Activated T-helper 2 cell treated with anti-CD3 and anti-CD28 coated beads, Interferon-gamma antibody, Interleukin-2, Interleukin-4, amounts not matched to agents 10 μg/mL and 5 μg/mL and 100 μg/mL, durations not matched to agents 14 hours and 24 hours and 36 hours (primary cell): ENCODE measurements at regions of chr1 and their contacts with region 1.

Region 1: DNA sequence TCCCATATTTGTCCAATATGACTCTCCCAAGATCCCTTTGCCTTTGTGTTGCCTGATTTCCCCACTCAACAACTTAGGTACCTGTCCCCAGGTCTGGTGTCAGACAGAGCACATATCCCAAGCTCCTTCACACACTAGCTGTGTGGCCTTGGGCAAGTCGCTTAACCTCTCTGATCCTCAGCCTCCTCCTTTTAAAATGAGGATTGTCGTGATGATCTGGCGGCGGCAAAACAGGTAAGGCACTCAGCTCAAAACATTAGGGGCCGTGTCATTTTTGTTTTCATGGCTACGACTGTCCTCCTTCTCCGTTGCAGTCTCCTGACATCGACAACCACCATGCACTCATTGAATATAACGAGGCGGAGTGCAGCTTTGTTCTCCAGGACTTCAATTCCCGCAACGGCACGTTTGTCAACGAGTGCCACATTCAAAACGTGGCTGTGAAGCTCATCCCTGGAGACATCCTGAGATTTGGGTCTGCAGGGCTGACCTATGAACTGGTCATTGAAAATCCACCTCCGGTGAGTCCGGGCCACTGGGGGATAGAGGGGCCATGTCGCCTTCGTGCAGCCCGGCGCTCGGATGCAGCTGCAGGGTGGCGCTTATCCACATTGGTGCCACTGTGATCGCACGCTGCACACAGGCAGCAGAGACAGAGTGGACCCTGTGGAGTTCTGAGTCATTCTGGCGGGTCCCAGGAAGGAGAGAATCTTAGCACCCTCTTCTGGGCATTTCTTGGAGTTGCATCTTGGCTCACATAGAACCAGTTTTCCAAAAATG is 25.2 kb downstream of the FHAD1 start:
- DNase-seq: no peak
- H3K4me3 Mint-ChIP-seq: no peak overlapping the region
- H3K27ac Mint-ChIP-seq: no peak overlapping the region
- H3K4me1 Mint-ChIP-seq: no peaks in the 10 kb centered on the region
- H3K27me3 Mint-ChIP-seq: peaks cover 29% of the 10 kb centered on the region

Region 2: DNA sequence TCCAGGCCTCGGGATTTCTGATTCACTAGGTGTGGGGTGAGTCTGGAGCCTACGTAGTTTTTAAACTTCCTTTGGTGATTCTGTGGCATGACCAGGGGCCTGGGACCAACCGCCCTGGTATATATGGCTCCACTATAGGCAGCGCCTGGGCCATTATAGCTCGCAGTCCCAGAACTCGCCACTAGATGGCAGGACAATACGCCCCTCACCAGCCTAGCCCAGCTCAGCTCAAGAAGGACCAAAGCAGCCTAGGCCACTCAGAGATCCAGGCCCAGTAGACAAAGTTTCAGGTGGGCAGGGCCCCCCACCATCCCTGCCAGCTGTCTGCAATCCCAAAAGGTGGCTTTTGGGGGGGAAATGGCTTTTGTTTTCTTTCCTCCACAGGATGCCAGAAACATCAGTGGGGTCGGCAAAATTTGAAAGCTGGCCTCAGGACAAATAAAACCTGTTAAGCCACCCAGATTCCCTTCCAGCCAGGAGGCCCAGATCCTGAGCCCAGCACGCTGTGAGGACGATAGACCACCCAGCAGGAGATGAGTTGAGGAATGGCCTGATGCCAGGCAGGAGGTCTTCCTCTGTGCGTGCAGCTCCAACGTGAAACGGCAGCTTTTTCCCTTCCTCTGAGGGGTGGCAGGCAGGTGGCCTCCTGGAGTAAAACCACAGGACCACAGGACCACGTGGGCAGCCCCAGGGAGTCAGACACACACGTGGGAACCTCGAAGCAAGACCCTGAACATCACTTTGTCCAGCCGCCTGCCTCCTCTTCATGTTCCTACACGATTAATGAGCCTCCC is 143.5 kb before region 1 on chr1:
- intact Hi-C with region 1: loop called (anchors 1 kb)
- DNase-seq: peak; percentile 60
- H3K4me3 Mint-ChIP-seq: no peak overlapping the region
- H3K27ac Mint-ChIP-seq: no peak overlapping the region
- H3K4me1 Mint-ChIP-seq: no peaks in the 10 kb centered on the region
- H3K27me3 Mint-ChIP-seq: peaks cover 15% of the 10 kb centered on the region

Region 3: GRCh38 chr1:15152318-15153183 is 119.6 kb before region 1 on chr1:
- intact Hi-C with region 1: loop called (anchors 10 kb)
- DNase-seq: no peak
- H3K4me3 Mint-ChIP-seq: peak overlapping the region; percentile 50
- H3K27ac Mint-ChIP-seq: no peak overlapping the region
- H3K4me1 Mint-ChIP-seq: peaks cover 19% of the 10 kb centered on the region
- H3K27me3 Mint-ChIP-seq: peaks cover 59% of the 10 kb centered on the region

Region 4: DNA sequence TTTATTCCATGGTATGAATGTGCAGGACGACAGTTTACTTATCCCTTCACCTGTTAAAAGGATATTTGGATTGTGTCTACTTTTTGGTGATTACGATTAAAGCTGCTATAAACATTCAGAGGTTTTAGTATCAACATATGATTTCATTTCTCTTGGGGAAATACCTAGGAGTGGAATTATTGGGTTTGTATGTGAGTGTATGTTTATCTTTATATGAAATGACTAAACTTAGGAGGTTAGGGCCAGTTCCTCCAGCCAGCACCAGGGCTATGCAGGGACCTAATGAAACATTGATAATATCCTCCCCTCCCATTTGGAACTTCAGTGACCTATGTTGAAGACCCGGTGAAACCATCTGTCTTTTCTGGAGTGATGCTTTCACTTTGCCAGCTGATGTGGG is 104.8 kb before region 1 on chr1:
- intact Hi-C with region 1: no loop called
- DNase-seq: no peak
- H3K4me3 Mint-ChIP-seq: no peak overlapping the region
- H3K27ac Mint-ChIP-seq: no peak overlapping the region
- H3K4me1 Mint-ChIP-seq: peaks cover 2% of the 10 kb centered on the region
- H3K27me3 Mint-ChIP-seq: peaks cover 34% of the 10 kb centered on the region

Region 5: DNA sequence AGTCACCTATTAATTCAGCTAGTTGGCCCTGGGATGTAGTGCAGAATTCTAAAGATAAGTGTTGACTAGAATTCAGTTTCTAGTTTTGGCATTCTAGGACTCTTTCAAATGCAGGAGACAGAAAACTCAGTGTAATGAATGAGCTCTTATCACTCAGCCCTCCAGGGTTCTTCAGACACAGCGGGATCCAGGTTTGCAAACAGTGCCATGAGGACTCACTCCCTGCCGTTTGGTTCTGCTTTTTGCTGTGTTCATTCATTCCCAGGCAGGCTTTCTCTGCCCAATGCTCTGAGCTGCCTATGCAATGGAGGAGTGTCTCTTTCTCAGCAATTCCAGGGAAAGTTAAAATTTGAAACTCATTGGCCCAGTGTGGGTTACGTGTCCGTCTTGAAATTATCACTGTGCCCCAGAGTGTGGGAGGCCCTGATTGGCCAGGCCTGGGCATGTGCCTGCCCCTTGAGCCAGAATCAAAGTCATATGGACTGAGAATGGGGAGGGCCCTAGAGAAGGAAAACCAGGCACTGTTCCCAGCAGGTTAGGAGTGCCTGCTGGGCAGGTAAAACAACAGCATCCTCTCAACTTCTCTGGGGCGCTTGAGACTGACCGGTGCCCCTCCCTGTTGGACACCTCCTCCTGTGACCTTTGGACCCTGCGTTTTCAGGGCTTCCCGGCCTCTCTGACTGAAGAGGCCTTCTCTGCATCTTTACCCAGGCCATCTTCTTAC is 75.2 kb before region 1 on chr1:
- intact Hi-C with region 1: no loop called
- DNase-seq: no peak
- H3K4me3 Mint-ChIP-seq: no peak overlapping the region
- H3K27ac Mint-ChIP-seq: no peak overlapping the region
- H3K4me1 Mint-ChIP-seq: no peaks in the 10 kb centered on the region
- H3K27me3 Mint-ChIP-seq: peaks cover 1% of the 10 kb centered on the region

Region 6: GRCh38 chr1:15290382-15290781 is 18.2 kb after region 1 on chr1:
- intact Hi-C with region 1: loop called (anchors 1 kb)
- DNase-seq: no peak
- H3K4me3 Mint-ChIP-seq: no peak overlapping the region
- H3K27ac Mint-ChIP-seq: peak overlapping the region; percentile 45
- H3K4me1 Mint-ChIP-seq: peaks cover 8% of the 10 kb centered on the region
- H3K27me3 Mint-ChIP-seq: no peaks in the 10 kb centered on the region

Region 7: DNA sequence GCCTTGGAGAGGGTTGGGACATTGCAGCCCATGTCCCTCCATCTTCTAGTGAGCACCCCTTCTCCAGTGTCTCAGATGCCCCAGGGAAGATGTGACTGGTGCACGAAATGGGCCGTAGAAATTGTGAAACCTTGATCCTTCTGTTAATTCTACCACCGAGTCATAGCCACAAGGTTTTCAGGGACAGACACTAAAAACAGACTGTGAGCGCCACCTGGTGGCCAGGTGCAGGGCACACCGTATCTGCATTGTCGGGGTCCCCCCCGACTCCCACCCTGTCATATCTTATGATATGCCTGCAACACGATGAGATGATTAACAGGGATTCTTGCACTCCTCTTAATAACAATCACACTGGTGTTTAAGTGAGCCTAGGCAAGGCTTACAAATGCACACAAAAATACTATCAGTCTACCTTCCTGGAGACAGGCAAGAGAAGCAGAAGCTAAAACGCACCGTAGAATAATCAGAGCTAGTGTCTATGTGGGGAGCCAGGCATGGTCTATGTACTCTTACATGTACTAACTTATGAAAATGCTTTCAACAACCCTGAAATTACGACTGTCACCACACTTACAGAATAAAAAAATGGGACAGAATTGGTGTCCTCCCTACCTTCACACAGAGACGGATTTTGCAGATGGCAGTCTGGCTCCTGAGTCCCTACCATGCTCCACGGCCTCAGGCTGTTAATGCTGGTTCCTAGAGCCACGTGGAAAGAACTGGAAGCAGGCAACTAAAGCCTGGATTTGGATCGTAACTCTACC is 32.7 kb after region 1 on chr1:
- intact Hi-C with region 1: loop called (anchors 1 kb)
- DNase-seq: peak; percentile 33
- H3K4me3 Mint-ChIP-seq: no peak overlapping the region
- H3K27ac Mint-ChIP-seq: no peak overlapping the region
- H3K4me1 Mint-ChIP-seq: no peaks in the 10 kb centered on the region
- H3K27me3 Mint-ChIP-seq: peaks cover 7% of the 10 kb centered on the region